ENCODE measurements at regions of chr2 and their contacts with region 1.

Region 1: DNA sequence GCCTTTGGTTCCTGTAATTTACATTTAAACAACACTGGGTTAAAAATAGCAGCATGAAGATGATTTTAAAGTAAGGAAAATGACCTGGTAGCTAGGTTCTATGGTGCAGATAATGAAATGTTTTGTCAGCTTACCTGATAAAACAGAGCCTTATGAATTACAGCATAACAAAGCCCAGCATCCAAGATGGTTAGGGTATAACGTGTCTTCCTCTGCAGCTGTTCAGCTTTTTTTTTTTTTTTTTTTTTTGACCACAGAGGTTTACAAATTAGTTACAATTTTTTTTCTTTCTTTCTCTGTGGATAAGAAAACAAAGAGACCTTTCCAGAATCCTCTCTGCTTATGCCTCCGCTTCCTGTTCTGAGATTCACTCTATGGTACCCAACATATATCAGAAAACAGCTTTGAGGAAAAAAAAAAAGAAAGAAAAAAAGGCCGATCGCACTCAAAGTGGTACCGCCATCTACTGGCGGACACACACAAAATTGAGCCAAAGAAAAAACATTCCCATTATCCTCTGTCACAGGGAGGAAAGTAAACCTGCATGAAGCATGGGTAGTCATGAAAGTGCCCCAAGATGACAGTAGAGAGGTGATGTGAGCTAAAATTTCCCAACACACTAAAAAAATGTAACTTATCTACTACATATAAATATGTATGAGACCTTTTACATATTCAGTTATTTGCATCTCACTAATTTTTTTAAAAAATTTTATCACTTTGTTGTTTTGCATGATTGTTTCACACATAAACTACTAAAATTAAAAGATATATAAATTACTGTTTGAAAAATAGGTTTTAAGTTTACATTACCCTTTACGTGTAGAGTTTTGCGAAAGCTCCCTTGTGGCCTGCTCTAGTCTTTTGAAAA is at the start of gene SCN3A:
- ATAC-seq: peak; percentile 60 to 94 (median 90)
- H3K4me3 ChIP-seq: peak within 1 kb of the TSS; percentile 33 to 50 (median 43)
- H3K27ac ChIP-seq: peak within 1 kb of the TSS; percentile 19 to 58
- H3K4me1 ChIP-seq: peaks cover 2 to 16% of the 10 kb centered on the region in 2 donors
- total RNA-seq, gene SCN3A: 0.66 to 42.0 (median 26.2) TPM

Region 2: DNA sequence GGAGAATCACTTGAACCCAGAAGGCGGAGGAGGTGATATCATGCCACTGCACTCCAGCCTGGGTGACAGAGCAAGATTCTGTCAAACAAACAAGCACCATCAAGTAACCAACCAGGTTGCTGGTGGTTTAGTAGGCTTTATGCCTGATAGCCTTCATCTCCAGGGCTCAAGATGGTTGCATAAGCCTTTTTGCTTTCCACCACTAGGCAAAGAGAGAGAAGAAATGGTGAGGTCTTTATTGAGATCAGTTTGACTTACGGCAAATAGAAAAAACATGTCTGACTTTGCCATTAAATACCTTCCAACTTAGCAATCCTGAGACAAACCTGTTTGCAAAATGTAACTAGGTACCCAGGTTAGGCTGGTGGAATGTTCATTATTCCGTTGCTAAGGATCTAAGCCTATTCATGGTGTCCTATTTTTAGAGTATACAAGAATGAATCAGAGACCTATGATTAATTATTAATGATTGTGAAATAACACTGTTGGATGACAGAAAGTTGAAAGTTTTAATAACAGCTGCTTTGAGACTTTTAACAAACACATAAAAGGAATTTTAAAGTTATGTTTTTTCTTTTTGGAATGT is 195.1 kb before region 1 on chr2:
- in situ Hi-C with region 1: loop called in 5 of 9 experiments (anchors 10 to 25 kb)
- ATAC-seq: peak in 1 of 8 experiments; percentile 58
- H3K4me3 ChIP-seq: no peak overlapping the region
- H3K27ac ChIP-seq: no peak overlapping the region
- H3K4me1 ChIP-seq: no peaks in the 10 kb centered on the region

Region 3: DNA sequence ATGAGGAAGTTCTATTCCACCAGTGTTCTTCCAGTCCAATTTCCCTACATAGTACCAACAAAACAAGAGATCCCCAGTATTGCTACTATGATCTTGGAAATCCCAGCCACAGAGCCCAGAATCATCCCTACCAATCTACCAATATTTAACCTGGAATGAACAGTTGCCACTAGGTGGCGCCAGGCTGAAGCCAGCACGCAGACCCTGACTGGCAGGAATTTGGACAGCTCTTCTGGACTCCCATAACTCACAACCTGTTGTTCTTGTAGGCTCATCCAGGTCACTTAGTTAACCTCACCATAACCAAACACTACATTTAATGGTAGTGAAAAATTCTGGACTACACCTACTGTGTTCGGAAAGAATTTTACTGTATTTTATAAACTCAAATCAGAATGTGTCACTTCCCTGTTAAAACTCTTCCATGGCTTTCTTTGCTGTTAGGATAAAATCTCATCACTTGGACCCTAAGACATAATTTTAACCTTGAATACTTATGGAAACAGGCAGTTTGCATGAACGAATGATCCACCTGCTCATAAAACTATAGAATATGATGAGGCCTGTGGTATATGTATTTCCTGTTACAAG is 188.8 kb before region 1 on chr2:
- in situ Hi-C with region 1: loop called in 5 of 9 experiments (anchors 10 to 25 kb)
- ATAC-seq: peak in 7 of 8 experiments; percentile 35 to 79 (median 49)
- H3K4me3 ChIP-seq: no peak overlapping the region
- H3K27ac ChIP-seq: no peak overlapping the region
- H3K4me1 ChIP-seq: peaks cover 10 to 23% of the 10 kb centered on the region in 2 donors

Region 4: GRCh38 chr2:165022781-165023180 is 181.1 kb before region 1 on chr2:
- in situ Hi-C with region 1: loop called in 5 of 9 experiments (anchors 10 to 25 kb)
- ATAC-seq: no peak
- H3K4me3 ChIP-seq: no peak overlapping the region
- H3K27ac ChIP-seq: no peak overlapping the region
- H3K4me1 ChIP-seq: peaks cover 4 to 10% of the 10 kb centered on the region in 2 donors